Right cardiac atrium (tissue), 5 donors: ENCODE measurements at regions of chr5 and their contacts with region 1.

Region 1: GRCh38 chr5:181243512-181244343 is at the start of gene RACK1:
- DNase-seq: peak; percentile 91 to 95 (median 93)
- ATAC-seq: peak; percentile 71 to 77
- H3K4me3 ChIP-seq: peak within 1 kb of the TSS; percentile 90
- H3K27ac ChIP-seq: peak within 1 kb of the TSS; percentile 95
- H3K4me1 ChIP-seq: peaks cover 6% of the 10 kb centered on the region
- H3K27me3 ChIP-seq: no peaks in the 10 kb centered on the region
- total RNA-seq, gene RACK1: 698 to 874 (median 743) TPM

Region 2: DNA sequence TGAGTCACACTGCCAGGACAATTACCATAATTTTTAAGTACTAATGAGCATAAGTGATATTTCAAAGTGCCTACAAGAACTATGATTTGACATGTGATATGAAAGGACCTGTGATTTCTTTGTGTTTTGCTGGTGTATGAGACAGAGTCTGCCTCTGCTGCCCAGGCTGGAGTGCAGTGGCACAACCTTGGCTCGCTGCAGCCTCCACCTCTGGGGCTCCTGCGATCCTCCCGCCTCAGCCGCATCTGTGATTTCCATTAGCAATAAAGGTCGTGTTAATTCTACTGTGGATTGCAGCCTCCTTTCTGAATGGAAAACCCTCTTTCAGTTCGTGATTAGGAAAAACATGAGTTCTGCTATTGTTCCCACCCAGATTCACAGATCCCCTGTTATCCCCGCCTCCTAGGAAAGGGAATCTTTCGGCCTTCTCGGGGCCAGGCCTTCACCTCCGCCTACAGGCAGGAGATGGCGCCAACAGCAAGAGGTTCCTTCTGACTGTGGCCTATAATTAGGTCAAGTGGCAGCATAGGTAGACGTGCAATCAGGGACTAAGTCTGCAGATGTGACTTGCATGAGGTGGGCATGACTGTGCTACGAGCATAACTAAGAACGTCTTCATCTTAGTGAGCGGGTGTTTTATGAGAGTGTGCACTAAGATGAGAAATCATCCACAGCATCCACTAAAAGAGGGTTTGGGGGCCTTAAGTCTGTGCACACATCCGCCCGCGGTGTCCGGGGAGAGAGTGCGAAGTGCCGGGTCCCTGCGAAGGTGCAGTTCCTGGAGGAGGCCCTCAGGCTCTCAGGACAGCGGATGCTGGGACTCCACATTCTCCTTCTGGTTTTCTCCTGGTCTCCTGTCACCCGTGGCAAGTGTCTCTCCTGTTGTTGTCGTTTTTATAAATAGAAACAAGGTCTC is 61.8 kb before region 1 on chr5:
- intact Hi-C with region 1: loop called in 2 of 4 experiments (anchors 10 kb)
- DNase-seq: peak; percentile 63 to 86 (median 83)
- ATAC-seq: peak; percentile 69 to 77
- H3K4me3 ChIP-seq: no peak overlapping the region
- H3K27ac ChIP-seq: no peak overlapping the region
- H3K4me1 ChIP-seq: no peaks in the 10 kb centered on the region
- H3K27me3 ChIP-seq: no peaks in the 10 kb centered on the region

Region 3: GRCh38 chr5:181223058-181223728 is 20.5 kb before region 1 on chr5 and contains the start of gene TRIM41:
- intact Hi-C with region 1: loop called in 1 of 4 experiments (anchors 2 kb)
- DNase-seq: peak; percentile 100
- ATAC-seq: peak; percentile 91 to 93
- H3K4me3 ChIP-seq: peak within 1 kb of the TSS; percentile 67
- H3K27ac ChIP-seq: peak within 1 kb of the TSS; percentile 95
- H3K4me1 ChIP-seq: peaks cover 4% of the 10 kb centered on the region
- H3K27me3 ChIP-seq: no peaks in the 10 kb centered on the region
- total RNA-seq, gene TRIM41: 18.6 to 21.2 (median 21.0) TPM

Region 4: DNA sequence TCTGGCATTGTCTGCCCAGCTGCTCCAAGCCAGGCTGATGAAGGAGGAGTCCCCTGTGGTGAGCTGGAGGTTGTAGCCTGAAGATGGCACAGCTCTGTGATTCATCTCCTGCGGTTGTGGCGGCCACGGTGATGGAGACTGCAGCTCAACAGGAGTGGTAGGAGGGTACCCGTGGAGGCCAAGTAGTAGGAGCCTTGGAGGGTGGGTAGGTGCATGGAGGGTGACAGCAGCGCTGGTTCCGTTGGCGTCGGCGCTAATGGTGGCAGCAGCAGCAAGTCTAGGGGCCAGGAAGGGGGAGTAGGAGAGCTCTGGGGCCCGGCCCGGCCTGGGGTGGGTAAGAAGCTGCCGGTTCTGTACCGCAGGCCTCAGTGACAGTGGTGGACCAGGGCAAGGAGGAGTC is 39.6 kb after region 1 on chr5:
- intact Hi-C with region 1: no loop called
- DNase-seq: no peak
- ATAC-seq: no peak
- H3K4me3 ChIP-seq: no peak overlapping the region
- H3K27ac ChIP-seq: no peak overlapping the region
- H3K4me1 ChIP-seq: no peaks in the 10 kb centered on the region
- H3K27me3 ChIP-seq: no peaks in the 10 kb centered on the region